Esophagus muscularis mucosa (tissue), 4 donors: ENCODE measurements at regions of chr4 and their contacts with region 1.

Region 1: DNA sequence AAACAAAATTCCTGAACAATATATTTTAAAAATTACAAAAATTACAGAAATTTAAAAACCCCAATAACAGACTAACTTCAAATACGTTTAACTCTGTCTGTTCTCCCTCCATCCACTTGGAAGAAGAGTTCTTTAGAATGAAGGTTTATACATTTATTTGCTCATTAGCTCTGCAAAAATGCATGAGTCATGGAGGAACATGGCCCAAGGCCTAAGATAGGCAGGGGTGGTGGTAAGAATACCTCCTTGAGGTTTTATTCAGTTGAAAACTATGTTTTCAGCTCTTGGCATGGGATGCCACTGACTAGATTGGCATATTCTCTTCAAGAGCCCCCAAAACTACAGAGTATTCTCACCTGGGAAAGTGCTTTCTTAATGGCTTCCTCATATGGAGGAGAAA is 8.8 kb upstream of the LRRC66 start:
- DNase-seq: no peak
- H3K4me3 ChIP-seq: no peak overlapping the region
- H3K27ac ChIP-seq: no peak overlapping the region
- H3K4me1 ChIP-seq: peaks cover 0 to 13% (median 9%) of the 10 kb centered on the region in 4 donors
- H3K27me3 ChIP-seq: no peaks in the 10 kb centered on the region
- CTCF ChIP-seq: no peak
- EP300 ChIP-seq: no peak
- POLR2A ChIP-seq: no peak

Region 2: DNA sequence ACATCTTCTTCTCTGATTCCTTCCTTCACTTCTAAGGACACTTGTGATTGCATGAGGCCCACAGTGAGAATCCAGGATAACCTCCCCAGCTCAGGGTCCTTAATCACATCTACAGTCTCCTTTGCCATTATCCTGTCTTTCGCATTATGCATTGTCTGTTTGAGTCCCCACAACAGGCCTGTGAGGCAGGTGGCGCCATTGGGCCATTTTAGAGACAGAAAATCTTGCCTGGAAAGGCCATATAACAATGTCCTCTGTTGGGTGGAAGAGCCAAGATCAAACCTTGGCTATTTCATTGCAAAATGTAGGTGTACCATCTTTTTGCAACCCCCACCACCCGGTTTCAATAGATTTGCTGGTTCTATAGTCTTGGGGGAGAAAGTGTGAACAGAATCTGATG is 197.8 kb before region 1 on chr4:
- intact Hi-C with region 1: loop called (anchors 1 kb)
- DNase-seq: no peak
- H3K4me3 ChIP-seq: no peak overlapping the region
- H3K27ac ChIP-seq: no peak overlapping the region
- H3K4me1 ChIP-seq: no peaks in the 10 kb centered on the region
- H3K27me3 ChIP-seq: no peaks in the 10 kb centered on the region
- CTCF ChIP-seq: peak; percentile 67 to 75 (median 68)
- EP300 ChIP-seq: no peak
- POLR2A ChIP-seq: no peak

Region 3: GRCh38 chr4:51895813-51896408 is 133.1 kb before region 1 on chr4:
- intact Hi-C with region 1: loop called (anchors 5 kb)
- DNase-seq: no peak
- H3K4me3 ChIP-seq: no peak overlapping the region
- H3K27ac ChIP-seq: peak overlapping the region; percentile 22 to 53 (median 51)
- H3K4me1 ChIP-seq: peaks cover 4 to 49% (median 39%) of the 10 kb centered on the region in 4 donors
- H3K27me3 ChIP-seq: no peaks in the 10 kb centered on the region
- CTCF ChIP-seq: peak; percentile 61 to 78 (median 66)
- EP300 ChIP-seq: no peak
- POLR2A ChIP-seq: no peak